Gastrocnemius medialis (tissue), 4 donors: ENCODE measurements at regions of chr17 and their contacts with region 1.

Region 1: GRCh38 chr17:73311781-73312641 is at the start of gene CDC42EP4:
- DNase-seq: peak; percentile 92 to 94
- ATAC-seq: peak; percentile 80 to 83
- H3K4me3 ChIP-seq: peak within 1 kb of the TSS; percentile 82 to 100 (median 94)
- H3K27ac ChIP-seq: peak within 1 kb of the TSS; percentile 92 to 100 (median 98)
- H3K4me1 ChIP-seq: peaks cover 19 to 33% of the 10 kb centered on the region in 2 donors
- H3K27me3 ChIP-seq: no peaks in the 10 kb centered on the region
- CTCF ChIP-seq: no peak
- POLR2A ChIP-seq: peak; percentile 97 to 98
- total RNA-seq, gene CDC42EP4: 35.8 to 57.0 (median 47.1) TPM

Region 2: GRCh38 chr17:73192894-73193701 is 118.9 kb before region 1 on chr17 and contains the start of gene COG1:
- in situ Hi-C with region 1: no loop called
- intact Hi-C with region 1: loop called (anchors 2 kb)
- DNase-seq: peak; percentile 59 to 82
- ATAC-seq: peak; percentile 83 to 85
- H3K4me3 ChIP-seq: peak within 1 kb of the TSS; percentile 55 to 100 (median 86)
- H3K27ac ChIP-seq: peak within 1 kb of the TSS; percentile 92 to 97 (median 95)
- H3K4me1 ChIP-seq: peaks cover 13 to 17% of the 10 kb centered on the region in 2 donors
- H3K27me3 ChIP-seq: no peaks in the 10 kb centered on the region
- CTCF ChIP-seq: no peak
- POLR2A ChIP-seq: peak in 1 of 2 donors; percentile 14
- total RNA-seq, gene COG1: 21.2 to 34.7 (median 26.7) TPM

Region 3: GRCh38 chr17:73231841-73232586 is 80.0 kb before region 1 on chr17:
- in situ Hi-C with region 1: no loop called
- intact Hi-C with region 1: loop called (anchors 1 kb)
- DNase-seq: peak; percentile 94
- ATAC-seq: peak; percentile 84 to 86
- H3K4me3 ChIP-seq: peak overlapping the region; percentile 89 to 99 (median 96)
- H3K27ac ChIP-seq: peak overlapping the region; percentile 92 to 97 (median 95)
- H3K4me1 ChIP-seq: peaks cover 44 to 51% of the 10 kb centered on the region in 2 donors
- H3K27me3 ChIP-seq: no peaks in the 10 kb centered on the region
- CTCF ChIP-seq: peak in 4 of 5 experiments; percentile 43 to 63 (median 58)
- POLR2A ChIP-seq: peak; percentile 90 to 91

Region 4: DNA sequence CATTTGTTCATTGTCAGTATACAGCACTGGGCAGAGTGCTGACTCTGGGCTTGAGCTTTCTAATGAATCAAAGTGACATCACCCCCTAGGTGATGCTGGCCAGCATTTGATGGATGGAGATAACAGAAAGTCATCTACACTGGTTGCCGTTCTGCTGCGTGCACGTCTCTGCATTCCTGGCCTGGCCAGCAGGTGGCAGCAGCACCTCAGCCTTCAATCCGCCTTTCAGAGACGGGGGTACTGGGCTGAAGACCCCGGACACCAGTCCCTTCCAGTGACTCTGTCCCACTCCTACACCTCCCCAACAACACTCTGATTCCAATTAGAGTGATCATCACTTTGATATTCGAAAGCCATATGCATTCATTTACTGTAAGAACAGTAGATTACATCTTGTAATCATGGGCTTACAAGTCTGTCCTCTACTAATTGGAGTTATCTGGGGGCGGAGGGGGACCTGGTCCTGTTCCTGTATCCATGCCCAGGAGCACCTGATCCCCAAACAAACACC is 56.3 kb before region 1 on chr17:
- in situ Hi-C with region 1: loop called in 1 of 4 experiments (anchors 10 kb)
- intact Hi-C with region 1: no loop called
- DNase-seq: peak in 1 of 2 donors; percentile 15
- ATAC-seq: peak; percentile 60 to 75
- H3K4me3 ChIP-seq: no peak overlapping the region
- H3K27ac ChIP-seq: no peak overlapping the region
- H3K4me1 ChIP-seq: no peaks in the 10 kb centered on the region
- H3K27me3 ChIP-seq: no peaks in the 10 kb centered on the region
- CTCF ChIP-seq: peak; percentile 95 to 98 (median 97)
- POLR2A ChIP-seq: no peak

Region 5: GRCh38 chr17:73291964-73292531 is 20.0 kb before region 1 on chr17:
- in situ Hi-C with region 1: no loop called
- intact Hi-C with region 1: loop called (anchors 2 kb)
- DNase-seq: peak; percentile 66 to 80
- ATAC-seq: peak; percentile 43 to 46
- H3K4me3 ChIP-seq: peak overlapping the region; percentile 6 to 37 (median 27)
- H3K27ac ChIP-seq: peak overlapping the region; percentile 82 to 92 (median 86)
- H3K4me1 ChIP-seq: peaks cover 70 to 73% of the 10 kb centered on the region in 2 donors
- H3K27me3 ChIP-seq: no peaks in the 10 kb centered on the region
- CTCF ChIP-seq: no peak
- POLR2A ChIP-seq: no peak